Calu3 (cell line): ENCODE measurements at regions of chr2 and their contacts with region 1.

Region 1: GRCh38 chr2:174688079-174688478 is 76.2 kb downstream of the CHRNA1 start:
- DNase-seq: no peak
- H3K4me3 Mint-ChIP-seq: no peak overlapping the region
- H3K27ac Mint-ChIP-seq: no peak overlapping the region
- H3K4me1 Mint-ChIP-seq: peaks cover 9% of the 10 kb centered on the region
- H3K27me3 Mint-ChIP-seq: peaks cover 70% of the 10 kb centered on the region
- CTCF ChIP-seq: peak; percentile 6

Region 2: DNA sequence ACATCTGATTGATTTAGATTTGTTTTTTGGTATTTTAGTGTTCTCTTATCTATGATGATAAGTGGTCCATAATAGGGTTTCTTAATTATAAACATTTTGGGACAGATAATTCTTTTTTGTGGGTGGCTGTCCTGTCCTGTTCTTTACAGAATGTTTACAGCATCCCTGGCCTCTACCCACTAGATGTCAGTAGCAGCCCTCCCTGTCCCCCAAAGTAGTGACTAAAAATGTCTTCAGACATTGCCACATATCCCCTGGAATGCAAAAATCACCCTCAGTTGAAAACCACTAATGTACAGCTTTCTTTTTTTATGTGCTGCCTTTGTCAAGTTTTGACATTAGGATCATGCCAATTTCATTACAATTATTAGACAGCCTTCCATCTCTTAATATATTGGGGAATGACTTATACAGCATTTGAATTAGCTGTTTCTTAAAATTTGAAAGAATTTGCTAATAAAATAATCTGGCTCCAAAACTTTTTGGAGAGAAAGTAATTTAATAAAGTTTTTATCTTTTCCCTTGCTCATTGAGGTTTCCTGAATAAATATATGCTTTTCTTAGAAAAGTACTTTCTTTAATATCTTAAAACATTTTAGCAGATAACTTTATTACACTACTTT is 110.0 kb before region 1 on chr2:
- CTCF ChIA-PET with region 1: interaction called, 4 read pairs
- intact Hi-C with region 1: loop called (anchors 5 kb)
- DNase-seq: peak; percentile 22
- H3K4me3 Mint-ChIP-seq: no peak overlapping the region
- H3K27ac Mint-ChIP-seq: no peak overlapping the region
- H3K4me1 Mint-ChIP-seq: no peaks in the 10 kb centered on the region
- H3K27me3 Mint-ChIP-seq: no peaks in the 10 kb centered on the region
- CTCF ChIP-seq: no peak